Activated CD4-positive, alpha-beta memory T cell treated with anti-CD3 and anti-CD28 coated beads for 36 hours (primary cell): ENCODE measurements at regions of chr5 and their contacts with region 1.

Region 1: GRCh38 chr5:173057062-173057924 is 1.1 kb downstream of the CREBRF start:
- DNase-seq: peak; percentile 100
- H3K4me3 Mint-ChIP-seq: peak overlapping the region; percentile 97
- H3K27ac Mint-ChIP-seq: peak overlapping the region; percentile 97
- H3K4me1 Mint-ChIP-seq: peaks cover 44% of the 10 kb centered on the region
- H3K27me3 Mint-ChIP-seq: no peaks in the 10 kb centered on the region

Region 2: DNA sequence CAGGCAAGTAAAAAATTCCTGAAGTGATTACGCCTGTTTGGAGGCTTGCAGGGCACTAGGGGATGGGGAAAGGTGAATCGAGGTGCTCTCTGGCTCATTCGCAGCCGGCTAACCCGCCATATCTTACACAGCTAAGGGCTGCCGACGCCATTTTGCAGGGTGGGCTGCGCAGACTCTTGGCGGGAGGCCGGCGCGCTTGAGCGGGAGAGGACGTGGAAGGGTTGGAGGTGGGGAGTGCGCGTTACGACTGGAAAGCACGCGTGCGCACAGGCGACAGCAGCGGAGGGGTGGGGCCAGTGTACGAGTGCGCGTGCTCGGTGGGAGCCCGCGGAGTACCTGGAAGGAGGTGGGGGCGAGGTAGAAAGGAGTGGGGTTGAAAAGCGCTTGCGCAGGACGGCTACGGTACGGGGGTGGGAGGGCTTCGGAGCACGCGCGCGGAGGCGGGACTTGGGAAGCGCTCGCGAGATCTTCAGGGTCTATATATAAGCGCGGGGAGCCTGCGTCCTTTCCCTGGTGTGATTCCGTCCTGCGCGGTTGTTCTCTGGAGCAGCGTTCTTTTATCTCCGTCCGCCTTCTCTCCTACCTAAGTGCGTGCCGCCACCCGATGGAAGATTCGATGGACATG is 1669.8 kb before region 1 on chr5 and contains the start of gene NPM1:
- CTCF ChIA-PET with region 1: interaction called, 3 read pairs
- POLR2A ChIA-PET with region 1: no interaction called
- intact Hi-C with region 1: loop called (anchors 2 kb)
- DNase-seq: peak; percentile 98
- H3K4me3 Mint-ChIP-seq: peak within 1 kb of the TSS; percentile 93
- H3K27ac Mint-ChIP-seq: peak within 1 kb of the TSS; percentile 96
- H3K4me1 Mint-ChIP-seq: peaks cover 39% of the 10 kb centered on the region
- H3K27me3 Mint-ChIP-seq: peaks cover 3% of the 10 kb centered on the region
- total RNA-seq, gene NPM1: 2,483 to 2,592 TPM

Region 3: DNA sequence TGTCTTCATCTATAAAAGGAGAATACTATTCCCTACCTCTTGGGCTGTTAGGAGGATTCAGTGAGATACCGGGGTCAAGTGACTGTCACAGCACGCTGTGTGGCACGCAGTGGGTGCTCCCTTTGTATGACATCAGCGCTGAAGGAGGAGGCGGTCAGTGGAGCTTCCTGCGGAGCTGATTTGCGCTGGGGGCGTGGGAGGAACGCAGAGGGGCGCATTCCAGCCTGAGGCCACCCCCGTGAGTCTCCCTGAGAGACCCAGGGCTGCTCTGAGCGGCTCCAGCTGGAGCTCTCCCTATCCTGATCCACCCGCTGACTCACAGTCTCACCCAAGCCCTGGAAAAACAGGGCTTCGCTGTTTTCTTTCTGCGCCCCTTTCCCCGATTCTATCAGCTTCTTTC is 440.6 kb before region 1 on chr5:
- CTCF ChIA-PET with region 1: no interaction called
- POLR2A ChIA-PET with region 1: no interaction called
- intact Hi-C with region 1: no loop called
- DNase-seq: no peak
- H3K4me3 Mint-ChIP-seq: no peak overlapping the region
- H3K27ac Mint-ChIP-seq: no peak overlapping the region
- H3K4me1 Mint-ChIP-seq: no peaks in the 10 kb centered on the region
- H3K27me3 Mint-ChIP-seq: peaks cover 2% of the 10 kb centered on the region

Region 4: GRCh38 chr5:172816901-172817564 is 240.3 kb before region 1 on chr5:
- CTCF ChIA-PET with region 1: no interaction called
- POLR2A ChIA-PET with region 1: no interaction called
- intact Hi-C with region 1: no loop called
- DNase-seq: peak; percentile 53
- H3K4me3 Mint-ChIP-seq: no peak overlapping the region
- H3K27ac Mint-ChIP-seq: no peak overlapping the region
- H3K4me1 Mint-ChIP-seq: peaks cover 21% of the 10 kb centered on the region
- H3K27me3 Mint-ChIP-seq: no peaks in the 10 kb centered on the region

Region 5: GRCh38 chr5:172897481-172898217 is 159.6 kb before region 1 on chr5:
- CTCF ChIA-PET with region 1: no interaction called
- POLR2A ChIA-PET with region 1: no interaction called
- intact Hi-C with region 1: no loop called
- DNase-seq: no peak
- H3K4me3 Mint-ChIP-seq: peak overlapping the region; percentile 21
- H3K27ac Mint-ChIP-seq: peak overlapping the region; percentile 31
- H3K4me1 Mint-ChIP-seq: peaks cover 11% of the 10 kb centered on the region
- H3K27me3 Mint-ChIP-seq: no peaks in the 10 kb centered on the region

Region 6: GRCh38 chr5:172958331-172959046 is 98.8 kb before region 1 on chr5:
- CTCF ChIA-PET with region 1: interaction called, 9 read pairs
- POLR2A ChIA-PET with region 1: interaction called, 4 read pairs
- intact Hi-C with region 1: loop called (anchors 1 kb)
- DNase-seq: peak; percentile 71
- H3K4me3 Mint-ChIP-seq: peak overlapping the region; percentile 98
- H3K27ac Mint-ChIP-seq: peak overlapping the region; percentile 83
- H3K4me1 Mint-ChIP-seq: peaks cover 18% of the 10 kb centered on the region
- H3K27me3 Mint-ChIP-seq: no peaks in the 10 kb centered on the region

Region 7: GRCh38 chr5:173035904-173036707 is 21.2 kb before region 1 on chr5:
- CTCF ChIA-PET with region 1: interaction called, 12 read pairs
- POLR2A ChIA-PET with region 1: interaction called, 24 read pairs
- intact Hi-C with region 1: loop called (anchors 1 kb)
- DNase-seq: peak; percentile 89
- H3K4me3 Mint-ChIP-seq: peak overlapping the region; percentile 78
- H3K27ac Mint-ChIP-seq: peak overlapping the region; percentile 98
- H3K4me1 Mint-ChIP-seq: peaks cover 64% of the 10 kb centered on the region
- H3K27me3 Mint-ChIP-seq: no peaks in the 10 kb centered on the region

Region 8: GRCh38 chr5:173331956-173332479 is 274.7 kb after region 1 on chr5:
- CTCF ChIA-PET with region 1: no interaction called
- POLR2A ChIA-PET with region 1: no interaction called
- intact Hi-C with region 1: loop called (anchors 5 kb)
- DNase-seq: peak; percentile 91
- H3K4me3 Mint-ChIP-seq: no peak overlapping the region
- H3K27ac Mint-ChIP-seq: no peak overlapping the region
- H3K4me1 Mint-ChIP-seq: peaks cover 22% of the 10 kb centered on the region
- H3K27me3 Mint-ChIP-seq: peaks cover 39% of the 10 kb centered on the region

Region 9: DNA sequence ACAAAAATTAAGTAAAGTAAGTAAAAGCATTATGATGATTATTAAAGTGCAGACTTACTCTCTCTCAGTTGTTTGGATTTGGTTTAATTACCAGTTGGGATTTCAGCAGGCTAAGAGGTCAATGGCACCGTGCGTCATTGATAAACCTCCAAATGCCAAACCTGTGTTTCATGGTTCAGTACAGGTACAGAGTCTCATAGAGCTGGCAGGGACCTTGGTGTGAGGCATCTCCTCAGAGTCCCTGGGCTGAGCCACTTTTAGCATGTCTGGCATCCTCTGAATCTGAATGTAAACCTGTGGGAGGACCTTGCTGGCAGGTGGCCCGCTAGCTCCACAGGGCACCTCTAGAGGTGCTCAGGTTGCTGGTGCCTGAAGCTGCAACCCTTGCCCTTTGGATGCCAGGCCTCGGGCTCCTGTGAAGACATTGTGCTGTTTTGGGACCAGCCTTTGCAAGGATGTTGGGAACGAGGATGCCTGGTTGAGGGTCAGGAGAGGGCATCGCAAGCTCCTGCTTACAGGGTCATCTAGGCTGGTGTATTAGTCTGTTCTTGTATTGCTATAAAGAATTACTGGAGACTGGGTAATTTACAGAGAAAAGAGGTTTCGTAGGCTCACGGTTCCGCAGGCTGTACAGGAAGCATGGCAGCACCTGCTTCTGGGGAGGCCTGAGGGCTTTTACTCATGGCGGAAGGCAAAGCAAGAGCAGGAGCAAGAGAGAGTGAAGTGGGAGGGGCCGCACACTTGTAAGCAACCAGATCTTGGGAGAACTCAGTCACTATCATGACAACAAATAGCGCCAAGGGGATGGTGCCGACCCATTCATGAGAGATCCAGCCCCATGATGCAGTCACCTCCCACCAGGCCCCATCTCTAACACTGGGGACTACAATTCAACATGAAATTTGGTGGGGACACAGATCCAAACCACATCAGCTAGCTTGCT is 285.8 kb after region 1 on chr5:
- CTCF ChIA-PET with region 1: no interaction called
- POLR2A ChIA-PET with region 1: no interaction called
- intact Hi-C with region 1: no loop called
- DNase-seq: no peak
- H3K4me3 Mint-ChIP-seq: no peak overlapping the region
- H3K27ac Mint-ChIP-seq: no peak overlapping the region
- H3K4me1 Mint-ChIP-seq: no peaks in the 10 kb centered on the region
- H3K27me3 Mint-ChIP-seq: peaks cover 7% of the 10 kb centered on the region